Activated CD8-positive, alpha-beta T cell treated with anti-CD3 and anti-CD28 coated beads for 36 hours (primary cell): ENCODE measurements at regions of chr10 and their contacts with region 1.

Region 1: DNA sequence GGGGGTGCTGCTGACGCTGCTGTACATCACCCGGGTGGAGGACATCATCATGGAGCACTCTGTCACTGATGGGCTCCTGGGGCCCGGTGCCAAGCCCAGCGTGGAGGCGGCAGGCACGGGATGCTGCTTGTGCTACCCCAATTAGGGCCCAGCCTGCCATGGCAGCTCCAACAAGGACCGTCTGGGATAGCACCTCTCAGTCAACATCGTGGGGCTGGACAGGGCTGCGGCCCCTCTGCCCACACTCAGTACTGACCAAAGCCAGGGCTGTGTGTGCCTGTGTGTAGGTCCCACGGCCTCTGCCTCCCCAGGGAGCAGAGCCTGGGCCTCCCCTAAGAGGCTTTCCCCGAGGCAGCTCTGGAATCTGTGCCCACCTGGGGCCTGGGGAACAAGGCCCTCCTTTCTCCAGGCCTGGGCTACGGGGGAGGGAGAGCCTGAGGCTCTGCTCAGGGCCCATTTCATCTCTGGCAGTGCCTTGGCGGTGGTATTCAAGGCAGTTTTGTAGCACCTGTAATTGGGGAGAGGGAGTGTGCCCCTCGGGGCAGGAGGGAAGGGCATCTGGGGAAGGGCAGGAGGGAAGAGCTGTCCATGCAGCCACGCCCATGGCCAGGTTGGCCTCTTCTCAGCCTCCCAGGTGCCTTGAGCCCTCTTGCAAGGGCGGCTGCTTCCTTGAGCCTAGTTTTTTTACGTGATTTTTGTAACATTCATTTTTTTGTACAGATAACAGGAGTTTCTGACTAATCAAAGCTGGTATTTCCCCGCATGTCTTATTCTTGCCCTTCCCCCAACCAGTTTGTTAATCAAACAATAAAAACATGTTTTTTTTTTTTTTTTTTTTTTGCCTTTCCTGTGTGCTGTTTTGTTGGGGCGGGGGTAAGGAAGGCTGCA is 55.8 kb downstream of the TSPAN15 start:
- DNase-seq: peak; percentile 10
- ATAC-seq: peak; percentile 15
- H3K4me3 Mint-ChIP-seq: peak overlapping the region; percentile 26
- H3K27ac Mint-ChIP-seq: peak overlapping the region; percentile 78
- H3K4me1 Mint-ChIP-seq: peaks cover 10% of the 10 kb centered on the region
- H3K27me3 Mint-ChIP-seq: peaks cover 1% of the 10 kb centered on the region
- CTCF ChIP-seq: no peak

Region 2: GRCh38 chr10:69237528-69238159 is 269.4 kb before region 1 on chr10:
- CTCF ChIA-PET with region 1: no interaction called
- POLR2A ChIA-PET with region 1: interaction called, 3 read pairs
- intact Hi-C with region 1: loop called (anchors 5 kb)
- DNase-seq: peak; percentile 93
- ATAC-seq: peak; percentile 99
- H3K4me3 Mint-ChIP-seq: no peak overlapping the region
- H3K27ac Mint-ChIP-seq: no peak overlapping the region
- H3K4me1 Mint-ChIP-seq: peaks cover 15% of the 10 kb centered on the region
- H3K27me3 Mint-ChIP-seq: no peaks in the 10 kb centered on the region
- CTCF ChIP-seq: peak; percentile 91

Region 3: GRCh38 chr10:69344591-69345252 is 162.4 kb before region 1 on chr10:
- CTCF ChIA-PET with region 1: no interaction called
- POLR2A ChIA-PET with region 1: no interaction called
- intact Hi-C with region 1: no loop called
- DNase-seq: peak; percentile 30
- ATAC-seq: peak; percentile 72
- H3K4me3 Mint-ChIP-seq: no peak overlapping the region
- H3K27ac Mint-ChIP-seq: peak overlapping the region; percentile 62
- H3K4me1 Mint-ChIP-seq: peaks cover 82% of the 10 kb centered on the region
- H3K27me3 Mint-ChIP-seq: no peaks in the 10 kb centered on the region
- CTCF ChIP-seq: no peak

Region 4: GRCh38 chr10:69425511-69426298 is 81.4 kb before region 1 on chr10:
- CTCF ChIA-PET with region 1: interaction called, 9 read pairs
- POLR2A ChIA-PET with region 1: no interaction called
- intact Hi-C with region 1: loop called (anchors 5 kb)
- DNase-seq: no peak
- ATAC-seq: peak; percentile 21
- H3K4me3 Mint-ChIP-seq: no peak overlapping the region
- H3K27ac Mint-ChIP-seq: no peak overlapping the region
- H3K4me1 Mint-ChIP-seq: peaks cover 37% of the 10 kb centered on the region
- H3K27me3 Mint-ChIP-seq: no peaks in the 10 kb centered on the region
- CTCF ChIP-seq: no peak

Region 5: GRCh38 chr10:69458426-69459108 is 48.5 kb before region 1 on chr10:
- CTCF ChIA-PET with region 1: interaction called, 4 read pairs
- POLR2A ChIA-PET with region 1: no interaction called
- intact Hi-C with region 1: loop called (anchors 5 kb)
- DNase-seq: no peak
- ATAC-seq: no peak
- H3K4me3 Mint-ChIP-seq: no peak overlapping the region
- H3K27ac Mint-ChIP-seq: no peak overlapping the region
- H3K4me1 Mint-ChIP-seq: peaks cover 13% of the 10 kb centered on the region
- H3K27me3 Mint-ChIP-seq: no peaks in the 10 kb centered on the region
- CTCF ChIP-seq: no peak